GM10248 (cell line): ENCODE measurements at regions of chr7 and their contacts with region 1.

Region 1: GRCh38 chr7:100563809-100564400 is 9.8 kb downstream of the SAP25 start:
- DNase-seq: peak; percentile 83
- CTCF ChIP-seq: peak; percentile 80

Region 2: DNA sequence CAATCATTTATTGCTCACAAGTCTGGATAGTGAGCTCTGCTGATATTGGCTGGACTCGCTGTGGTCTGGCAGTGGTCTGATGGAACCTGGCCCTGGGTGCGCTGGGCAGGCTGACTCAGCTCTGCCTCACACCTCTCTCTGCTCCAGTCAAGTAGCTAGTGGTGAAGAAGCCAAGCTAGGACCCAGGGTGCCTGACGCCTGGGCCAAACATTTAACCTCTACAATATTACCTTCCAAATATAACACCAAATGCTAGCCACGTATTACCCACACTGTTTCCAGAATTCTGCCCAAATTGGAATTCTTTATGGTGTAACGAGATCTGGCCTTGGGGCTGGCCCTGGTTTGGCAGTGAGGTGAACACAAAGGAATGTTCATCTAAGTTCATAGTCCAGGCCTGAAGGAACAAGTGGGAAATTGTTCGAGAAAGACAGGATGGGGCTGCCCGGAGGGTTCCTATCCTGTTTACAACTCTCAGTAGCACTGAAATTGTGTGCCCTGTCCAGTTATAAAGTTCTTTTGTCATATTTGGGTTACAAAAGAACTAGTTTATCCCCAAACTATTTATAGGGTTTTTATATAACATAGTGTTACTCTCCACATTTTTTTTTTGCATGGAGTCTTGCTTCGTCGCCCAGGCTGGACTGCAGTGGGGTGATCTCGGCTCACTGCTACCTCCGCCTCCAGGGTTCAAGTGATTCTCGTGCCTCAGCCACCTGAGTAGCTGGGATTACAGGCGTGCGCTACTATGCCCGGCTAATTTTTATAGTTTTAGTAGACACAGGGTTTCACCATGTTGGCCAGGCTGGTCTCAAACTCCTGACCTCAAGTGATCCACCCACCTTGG is 703.4 kb before region 1 on chr7:
- CTCF ChIA-PET with region 1: no interaction called
- POLR2A ChIA-PET with region 1: no interaction called
- DNase-seq: no peak
- CTCF ChIP-seq: no peak

Region 3: DNA sequence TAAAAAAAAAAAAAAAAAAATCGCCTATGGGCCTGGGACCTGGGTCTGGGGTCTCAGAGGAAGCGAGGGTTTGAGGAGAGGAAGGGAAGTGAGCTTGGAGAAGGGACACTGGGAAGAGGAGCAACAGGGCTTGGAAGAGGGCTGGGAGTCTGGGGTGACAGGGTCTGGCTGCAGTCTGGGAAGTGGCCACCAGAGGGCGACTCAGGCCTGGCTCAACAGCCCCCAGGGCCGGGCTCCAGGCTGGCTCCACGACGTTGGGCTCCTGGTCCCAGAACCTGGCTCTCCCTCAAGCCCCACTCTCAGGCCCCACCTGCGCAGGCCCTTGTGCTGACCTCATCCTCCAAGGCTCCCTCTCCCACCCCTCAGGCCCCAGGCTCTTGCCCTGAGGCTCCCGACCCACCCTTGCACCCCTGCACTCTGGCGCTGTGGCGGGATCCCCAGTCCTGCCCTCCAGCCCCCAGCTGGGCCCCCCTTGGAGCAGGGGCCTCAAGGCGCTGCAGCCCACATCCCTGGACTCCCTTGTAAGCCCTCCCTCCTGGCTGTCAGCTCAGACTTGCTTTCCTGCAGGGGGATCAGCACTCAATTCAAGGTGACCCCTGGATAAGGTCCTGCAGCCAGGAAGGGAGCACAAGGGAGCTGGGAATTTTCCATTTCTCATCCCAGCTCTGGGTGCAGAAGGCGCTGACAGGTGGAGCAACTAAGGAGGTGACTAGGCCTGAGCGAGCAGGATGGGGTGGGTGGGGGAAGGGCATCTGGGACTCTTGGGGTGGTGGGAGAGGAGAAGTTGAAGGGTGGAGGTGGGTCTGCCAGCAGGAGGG is 94.5 kb before region 1 on chr7:
- CTCF ChIA-PET with region 1: interaction called, 49 read pairs
- POLR2A ChIA-PET with region 1: interaction called, 4 read pairs
- DNase-seq: peak; percentile 89
- CTCF ChIP-seq: peak; percentile 98

Region 4: GRCh38 chr7:100516135-100516812 is 47.6 kb before region 1 on chr7:
- CTCF ChIA-PET with region 1: interaction called, 26 read pairs
- POLR2A ChIA-PET with region 1: no interaction called
- DNase-seq: peak; percentile 48
- CTCF ChIP-seq: no peak

Region 5: DNA sequence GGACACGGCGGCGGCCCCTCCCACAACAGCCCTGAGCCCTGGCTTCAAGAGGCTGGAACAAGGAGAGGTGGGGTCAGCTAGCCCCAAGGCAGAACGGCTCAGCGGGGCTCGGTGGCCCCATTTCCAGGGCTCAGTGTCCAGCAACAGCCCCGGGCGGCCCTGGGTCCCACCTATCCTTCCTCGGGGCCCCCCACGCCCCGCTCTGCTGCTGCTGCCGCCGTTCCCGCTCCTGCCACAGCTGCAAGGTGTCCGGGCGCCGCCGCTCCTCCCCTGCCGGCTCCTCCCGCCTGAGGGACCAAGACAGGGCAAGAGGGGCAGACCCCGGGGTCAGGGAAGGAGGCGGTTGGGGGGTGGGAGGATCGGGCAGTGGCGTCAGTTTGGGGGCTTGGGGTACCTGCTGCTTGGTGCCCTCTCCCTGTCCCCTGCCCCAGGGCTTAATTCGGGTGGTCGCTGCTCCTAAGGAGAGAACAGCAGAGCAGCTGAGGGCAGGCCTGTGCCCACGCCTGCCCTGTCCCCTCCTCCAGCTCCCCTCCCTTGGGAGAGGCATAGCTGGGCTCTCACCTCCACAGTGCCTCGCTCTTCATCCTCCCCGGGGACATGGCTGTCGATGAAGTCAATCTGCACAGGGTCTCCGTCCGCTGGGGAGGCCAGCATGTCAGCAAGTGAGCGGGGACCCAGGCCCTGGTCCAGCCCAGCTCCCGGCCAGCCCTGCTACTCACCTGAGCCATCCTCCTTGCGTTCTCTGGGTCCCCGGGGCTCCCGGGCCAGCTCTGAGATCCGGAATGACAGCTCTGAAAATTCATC is 13.4 kb after region 1 on chr7:
- CTCF ChIA-PET with region 1: interaction called, 16 read pairs
- POLR2A ChIA-PET with region 1: no interaction called
- DNase-seq: no peak
- CTCF ChIP-seq: no peak

Region 6: GRCh38 chr7:100726996-100727761 is 163.3 kb after region 1 on chr7:
- CTCF ChIA-PET with region 1: interaction called, 16 read pairs
- POLR2A ChIA-PET with region 1: no interaction called
- DNase-seq: no peak
- CTCF ChIP-seq: no peak